ENCODE measurements at regions of chr22 and their contacts with region 1.

Region 1: DNA sequence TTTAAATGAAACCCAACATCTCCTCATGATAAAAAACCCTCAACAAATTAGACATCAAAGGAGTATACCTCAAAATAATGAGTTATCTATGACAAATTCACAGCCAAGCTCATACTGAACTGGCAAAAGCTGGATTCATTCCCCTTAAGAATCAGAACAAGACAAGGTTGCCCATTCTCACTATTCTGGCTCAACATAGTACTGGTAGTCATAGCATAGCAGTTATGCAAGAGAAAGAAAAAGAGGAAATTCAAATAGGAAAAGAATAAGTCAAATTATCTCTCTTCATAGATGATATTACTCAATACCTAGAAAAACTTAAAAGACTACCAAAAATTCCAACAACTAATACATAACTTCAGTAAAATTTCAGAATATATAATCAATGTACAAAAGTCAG is 29.4 kb upstream of the XKR3 start:
- DNase-seq: no peak
- ATAC-seq: no peak
- H3K4me3 ChIP-seq: no peak overlapping the region
- H3K27ac ChIP-seq: no peak overlapping the region
- H3K4me1 ChIP-seq: no peaks in the 10 kb centered on the region
- H3K27me3 ChIP-seq: no peaks in the 10 kb centered on the region
- CTCF ChIP-seq: no peak
- POLR2A ChIP-seq: no peak

Region 2: DNA sequence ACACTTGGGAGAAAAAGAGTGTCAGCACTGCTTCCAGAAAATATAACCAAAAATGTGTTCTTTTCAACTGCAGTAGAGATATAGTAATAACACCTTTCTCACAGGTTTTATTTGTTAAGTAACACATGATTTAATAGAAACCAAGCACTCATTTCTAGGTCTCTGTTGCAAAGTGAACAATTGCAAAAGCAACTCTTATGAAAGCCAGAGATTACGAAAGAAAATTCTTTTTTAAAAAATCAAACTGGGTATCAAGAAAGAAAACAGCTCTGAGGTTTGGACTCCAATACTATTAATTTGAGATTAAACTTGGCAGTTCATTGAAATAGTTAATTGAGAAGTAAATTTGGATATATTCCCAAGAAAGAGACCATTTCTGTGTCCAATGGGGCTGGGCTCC is 19.7 kb before region 1 on chr22:
- intact Hi-C with region 1: loop called in 1 of 10 experiments (anchors 2 kb)
- DNase-seq: no peak
- ATAC-seq: no peak
- H3K4me3 ChIP-seq: no peak overlapping the region
- H3K27ac ChIP-seq: no peak overlapping the region
- H3K4me1 ChIP-seq: peaks cover 0 to 5% (median 0%) of the 10 kb centered on the region in 12 donors
- H3K27me3 ChIP-seq: peaks cover 0 to 8% (median 0%) of the 10 kb centered on the region in 9 donors
- CTCF ChIP-seq: no peak
- POLR2A ChIP-seq: no peak

Measured in heart left ventricle (tissue), 16 donors.